HCT116 (cell line): ENCODE measurements at regions of chr3 and their contacts with region 1.

Region 1: DNA sequence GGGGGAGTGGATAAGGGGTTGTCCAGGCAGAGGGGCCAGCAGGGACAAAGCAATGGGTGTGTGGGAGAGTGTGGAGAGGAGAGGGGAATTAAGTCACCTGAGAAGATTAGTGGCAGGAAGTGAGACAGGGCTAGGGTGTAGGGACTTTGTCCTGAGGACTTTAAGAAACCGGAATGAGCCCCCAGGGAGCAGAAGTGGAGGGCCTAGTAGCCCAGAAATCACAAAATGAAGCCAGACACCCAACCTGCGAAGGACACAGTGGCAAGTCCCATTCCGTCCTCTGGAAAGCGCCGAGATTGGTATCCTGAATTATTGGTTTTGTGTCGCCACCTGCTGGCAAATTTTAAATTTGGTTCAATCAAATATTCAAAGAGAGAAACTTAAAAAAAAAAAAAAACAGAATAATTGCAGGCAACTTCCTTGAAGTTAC is 78.0 kb upstream of the SLC25A36 start:
- DNase-seq: peak; percentile 45
- ATAC-seq: peak; percentile 86
- H3K4me3 ChIP-seq: no peak overlapping the region
- H3K27ac ChIP-seq: no peak overlapping the region
- H3K4me1 ChIP-seq: no peaks in the 10 kb centered on the region
- H3K27me3 ChIP-seq: peaks cover 8% of the 10 kb centered on the region; the same call in 1 of the 2 replicates
- CTCF ChIP-seq: peak in 2 of 3 experiments; percentile 57 to 59; a peak in 5 of 6 replicates
- POLR2A ChIP-seq: no peak
- RAD21 ChIP-seq: peak; percentile 76

Region 2: GRCh38 chr3:140276703-140277102 is 586.9 kb before region 1 on chr3:
- CTCF ChIA-PET with region 1: no interaction called
- POLR2A ChIA-PET with region 1: no interaction called
- RAD21 ChIA-PET with region 1: no interaction called
- intact Hi-C with region 1: loop called (anchors 10 kb)
- DNase-seq: peak; percentile 12
- ATAC-seq: peak; percentile 63
- H3K4me3 ChIP-seq: no peak overlapping the region
- H3K27ac ChIP-seq: no peak overlapping the region
- H3K4me1 ChIP-seq: no peaks in the 10 kb centered on the region
- H3K27me3 ChIP-seq: peaks cover 41% of the 10 kb centered on the region
- CTCF ChIP-seq: peak; percentile 6 to 47 (median 41); a peak in 4 of 6 replicates
- POLR2A ChIP-seq: no peak
- RAD21 ChIP-seq: peak; percentile 20; the same call in 1 of the 2 replicates

Region 3: GRCh38 chr3:140573011-140573410 is 290.6 kb before region 1 on chr3:
- CTCF ChIA-PET with region 1: no interaction called
- POLR2A ChIA-PET with region 1: no interaction called
- RAD21 ChIA-PET with region 1: no interaction called
- intact Hi-C with region 1: loop called (anchors 10 kb)
- DNase-seq: no peak
- ATAC-seq: no peak
- H3K4me3 ChIP-seq: no peak overlapping the region
- H3K27ac ChIP-seq: no peak overlapping the region
- H3K4me1 ChIP-seq: no peaks in the 10 kb centered on the region
- H3K27me3 ChIP-seq: peaks cover 19% of the 10 kb centered on the region
- CTCF ChIP-seq: no peak
- POLR2A ChIP-seq: no peak
- RAD21 ChIP-seq: no peak

Region 4: GRCh38 chr3:140850210-140850808 is 13.3 kb before region 1 on chr3:
- CTCF ChIA-PET with region 1: no interaction called
- POLR2A ChIA-PET with region 1: no interaction called
- RAD21 ChIA-PET with region 1: no interaction called
- intact Hi-C with region 1: no loop called
- DNase-seq: no peak
- ATAC-seq: no peak
- H3K4me3 ChIP-seq: no peak overlapping the region
- H3K27ac ChIP-seq: no peak overlapping the region
- H3K4me1 ChIP-seq: no peaks in the 10 kb centered on the region
- H3K27me3 ChIP-seq: peaks cover 36% of the 10 kb centered on the region
- CTCF ChIP-seq: no peak
- POLR2A ChIP-seq: no peak
- RAD21 ChIP-seq: no peak

Region 5: DNA sequence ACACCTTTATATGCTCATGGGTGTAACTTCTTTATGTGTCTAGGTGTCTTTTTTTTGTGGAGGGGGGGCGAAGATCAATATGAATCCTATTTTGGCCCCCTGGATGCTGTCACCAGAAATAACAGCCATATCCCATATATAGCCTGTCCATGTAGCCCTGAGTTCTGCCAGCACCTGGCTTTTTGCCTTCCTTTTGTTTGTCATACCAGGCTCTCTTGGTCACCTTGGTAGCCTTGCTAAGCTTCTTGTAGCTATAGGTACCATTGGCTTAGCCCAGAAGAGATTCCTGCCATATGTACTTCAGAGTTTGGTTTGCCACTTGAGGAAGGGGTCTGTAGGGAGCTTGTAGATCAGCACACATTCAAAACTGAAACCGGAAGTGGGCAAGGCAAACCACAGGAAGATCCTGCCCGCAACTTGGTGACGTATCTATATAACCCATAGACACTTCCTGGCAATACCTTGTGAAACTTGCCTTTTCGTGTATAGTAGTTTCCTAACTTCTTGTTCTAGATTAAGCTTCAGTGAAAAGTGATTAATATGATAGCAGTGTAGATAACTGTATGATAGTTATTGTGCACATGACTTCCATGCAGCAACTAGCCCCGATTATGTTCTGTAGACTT is 635.1 kb after region 1 on chr3:
- CTCF ChIA-PET with region 1: no interaction called
- POLR2A ChIA-PET with region 1: no interaction called
- RAD21 ChIA-PET with region 1: no interaction called
- intact Hi-C with region 1: no loop called
- DNase-seq: no peak
- ATAC-seq: no peak
- H3K4me3 ChIP-seq: no peak overlapping the region
- H3K27ac ChIP-seq: no peak overlapping the region
- H3K4me1 ChIP-seq: no peaks in the 10 kb centered on the region
- H3K27me3 ChIP-seq: no peaks in the 10 kb centered on the region
- CTCF ChIP-seq: no peak
- POLR2A ChIP-seq: no peak
- RAD21 ChIP-seq: no peak